ENCODE measurements at regions of chr1 and their contacts with region 1.

Region 1: DNA sequence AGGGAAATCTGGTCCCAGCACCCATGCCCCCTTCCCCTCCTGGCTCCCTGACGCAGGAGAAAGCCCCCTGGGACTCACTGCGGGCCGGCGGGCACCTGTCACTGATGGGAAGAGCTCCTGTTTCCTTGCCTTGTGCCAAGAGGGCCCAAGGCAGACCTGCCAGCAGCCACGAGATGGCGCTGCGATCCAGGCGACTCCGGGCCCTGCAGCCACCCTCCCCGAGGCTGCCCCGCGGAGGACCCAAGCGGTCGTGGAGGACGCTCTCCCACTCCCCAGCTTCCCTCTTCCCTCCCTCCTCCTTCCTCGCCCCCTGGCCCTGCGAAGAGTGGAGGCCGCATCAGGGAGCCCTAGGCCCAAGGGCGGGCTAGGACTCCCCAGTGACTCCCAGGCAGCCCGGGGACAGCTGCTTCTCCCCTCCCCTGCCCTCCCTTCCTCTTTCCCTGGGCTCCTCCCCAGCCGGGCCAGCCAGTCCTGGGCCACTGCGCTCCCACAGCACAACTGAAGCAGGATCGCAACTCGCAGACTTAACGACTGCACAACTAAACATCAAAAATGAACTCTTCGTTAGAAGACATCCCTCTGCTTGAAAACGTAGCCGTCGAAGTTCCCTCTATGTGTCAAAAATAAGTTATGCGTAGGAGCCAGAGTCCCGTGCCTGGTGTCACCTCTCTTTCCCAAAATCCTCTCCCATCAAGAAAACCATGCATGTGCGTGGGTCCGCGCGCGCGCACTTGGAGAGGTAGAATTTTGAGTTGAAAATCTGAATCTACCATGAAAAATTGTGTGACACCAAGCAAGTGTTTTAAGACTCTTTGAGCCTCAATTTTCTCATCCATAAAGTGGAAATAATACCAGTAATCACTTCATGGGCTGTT is 34.2 kb downstream of the BATF3 start:
- DNase-seq: peak; percentile 81
- H3K4me3 ChIP-seq: peak overlapping the region in 2 of 3 experiments; percentile 39 to 40
- H3K27ac ChIP-seq: peak overlapping the region; percentile 41
- H3K4me1 ChIP-seq: peaks cover 27% of the 10 kb centered on the region
- H3K27me3 ChIP-seq: peaks cover 3 to 4% of the 10 kb centered on the region in 2 experiments
- CTCF ChIP-seq: peak; percentile 90 to 98
- POLR2A ChIP-seq: no peak

Region 2: GRCh38 chr1:211939876-211940468 is 725.5 kb before region 1 on chr1:
- CTCF ChIA-PET with region 1: no interaction called
- POLR2A ChIA-PET with region 1: no interaction called
- dilution Hi-C with region 1: no loop called
- intact Hi-C with region 1: no loop called
- DNase-seq: no peak
- H3K4me3 ChIP-seq: no peak overlapping the region
- H3K27ac ChIP-seq: no peak overlapping the region
- H3K4me1 ChIP-seq: no peaks in the 10 kb centered on the region
- H3K27me3 ChIP-seq: no peaks in the 10 kb centered on the region
- CTCF ChIP-seq: no peak
- POLR2A ChIP-seq: no peak

Region 3: DNA sequence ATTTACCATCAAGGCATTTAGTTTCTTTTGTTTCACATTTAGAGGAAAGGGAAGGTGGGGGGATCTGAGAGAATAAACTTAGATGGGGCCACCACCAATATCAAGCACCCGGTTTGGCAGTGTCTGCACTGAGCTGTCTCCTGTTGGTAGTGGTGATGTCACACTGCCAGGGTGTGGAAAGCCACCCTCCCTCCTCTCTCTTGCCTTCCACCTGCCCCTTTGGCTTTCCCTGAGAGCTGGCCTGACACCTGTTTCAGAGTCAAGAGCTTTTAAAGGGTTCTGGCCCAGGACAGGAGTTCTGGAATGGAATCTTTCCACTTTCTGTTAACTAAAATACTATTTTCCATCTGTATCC is 43.5 kb before region 1 on chr1:
- CTCF ChIA-PET with region 1: interaction called, 11 read pairs
- POLR2A ChIA-PET with region 1: no interaction called
- dilution Hi-C with region 1: no loop called
- intact Hi-C with region 1: no loop called
- DNase-seq: no peak
- H3K4me3 ChIP-seq: no peak overlapping the region
- H3K27ac ChIP-seq: no peak overlapping the region
- H3K4me1 ChIP-seq: peaks cover 13% of the 10 kb centered on the region
- H3K27me3 ChIP-seq: peaks cover 0 to 8% of the 10 kb centered on the region in 2 experiments
- CTCF ChIP-seq: no peak
- POLR2A ChIP-seq: no peak

Region 4: GRCh38 chr1:212678456-212679410 is 13.3 kb after region 1 on chr1:
- CTCF ChIA-PET with region 1: interaction called, 10 read pairs
- POLR2A ChIA-PET with region 1: no interaction called
- dilution Hi-C with region 1: no loop called
- intact Hi-C with region 1: no loop called
- DNase-seq: no peak
- H3K4me3 ChIP-seq: no peak overlapping the region
- H3K27ac ChIP-seq: no peak overlapping the region
- H3K4me1 ChIP-seq: no peaks in the 10 kb centered on the region
- H3K27me3 ChIP-seq: peaks cover 4 to 22% of the 10 kb centered on the region in 2 experiments
- CTCF ChIP-seq: no peak
- POLR2A ChIP-seq: no peak

Region 5: GRCh38 chr1:212712451-212713303 is 47.2 kb after region 1 on chr1:
- CTCF ChIA-PET with region 1: interaction called, 13 read pairs
- POLR2A ChIA-PET with region 1: no interaction called
- dilution Hi-C with region 1: no loop called
- intact Hi-C with region 1: loop called (anchors 1 kb)
- DNase-seq: peak; percentile 51
- H3K4me3 ChIP-seq: no peak overlapping the region
- H3K27ac ChIP-seq: peak overlapping the region; percentile 60
- H3K4me1 ChIP-seq: peaks cover 8% of the 10 kb centered on the region
- H3K27me3 ChIP-seq: no peaks in the 10 kb centered on the region
- CTCF ChIP-seq: no peak
- POLR2A ChIP-seq: no peak

Region 6: GRCh38 chr1:212749821-212750535 is 84.5 kb after region 1 on chr1:
- CTCF ChIA-PET with region 1: interaction called, 65 read pairs
- POLR2A ChIA-PET with region 1: no interaction called
- dilution Hi-C with region 1: no loop called
- intact Hi-C with region 1: loop called (anchors 1 kb)
- DNase-seq: peak; percentile 67
- H3K4me3 ChIP-seq: no peak overlapping the region
- H3K27ac ChIP-seq: peak overlapping the region; percentile 13
- H3K4me1 ChIP-seq: no peaks in the 10 kb centered on the region
- H3K27me3 ChIP-seq: no peaks in the 10 kb centered on the region
- CTCF ChIP-seq: peak; percentile 68 to 79
- POLR2A ChIP-seq: no peak

Region 7: DNA sequence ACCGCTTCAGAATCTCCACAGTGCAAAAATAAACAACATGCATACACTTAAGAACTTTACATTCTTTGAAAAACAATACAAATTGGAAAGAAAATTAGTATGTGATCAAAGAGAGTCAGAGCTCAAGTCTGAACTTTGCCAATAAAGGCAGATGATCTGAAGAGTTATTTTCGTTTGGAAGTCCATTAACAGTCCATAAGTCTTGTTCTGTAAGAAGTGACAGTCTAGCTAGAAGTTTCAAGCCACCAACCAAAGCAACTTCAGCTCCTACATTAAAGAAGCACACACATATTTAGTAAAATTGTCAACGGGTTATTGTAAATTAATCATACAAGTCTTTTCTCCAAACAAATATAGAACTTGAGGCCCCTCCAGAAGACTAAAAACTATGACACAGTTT is 329.4 kb after region 1 on chr1:
- CTCF ChIA-PET with region 1: interaction called, 47 read pairs
- POLR2A ChIA-PET with region 1: no interaction called
- dilution Hi-C with region 1: no loop called
- intact Hi-C with region 1: loop called (anchors 1 kb)
- DNase-seq: no peak
- H3K4me3 ChIP-seq: no peak overlapping the region
- H3K27ac ChIP-seq: no peak overlapping the region
- H3K4me1 ChIP-seq: no peaks in the 10 kb centered on the region
- H3K27me3 ChIP-seq: no peaks in the 10 kb centered on the region
- CTCF ChIP-seq: no peak
- POLR2A ChIP-seq: no peak

Measured in endothelial cell of umbilical vein (primary cell).